AG04449 (cell line): ENCODE measurements at regions of chr14 and their contacts with region 1.

Region 1: DNA sequence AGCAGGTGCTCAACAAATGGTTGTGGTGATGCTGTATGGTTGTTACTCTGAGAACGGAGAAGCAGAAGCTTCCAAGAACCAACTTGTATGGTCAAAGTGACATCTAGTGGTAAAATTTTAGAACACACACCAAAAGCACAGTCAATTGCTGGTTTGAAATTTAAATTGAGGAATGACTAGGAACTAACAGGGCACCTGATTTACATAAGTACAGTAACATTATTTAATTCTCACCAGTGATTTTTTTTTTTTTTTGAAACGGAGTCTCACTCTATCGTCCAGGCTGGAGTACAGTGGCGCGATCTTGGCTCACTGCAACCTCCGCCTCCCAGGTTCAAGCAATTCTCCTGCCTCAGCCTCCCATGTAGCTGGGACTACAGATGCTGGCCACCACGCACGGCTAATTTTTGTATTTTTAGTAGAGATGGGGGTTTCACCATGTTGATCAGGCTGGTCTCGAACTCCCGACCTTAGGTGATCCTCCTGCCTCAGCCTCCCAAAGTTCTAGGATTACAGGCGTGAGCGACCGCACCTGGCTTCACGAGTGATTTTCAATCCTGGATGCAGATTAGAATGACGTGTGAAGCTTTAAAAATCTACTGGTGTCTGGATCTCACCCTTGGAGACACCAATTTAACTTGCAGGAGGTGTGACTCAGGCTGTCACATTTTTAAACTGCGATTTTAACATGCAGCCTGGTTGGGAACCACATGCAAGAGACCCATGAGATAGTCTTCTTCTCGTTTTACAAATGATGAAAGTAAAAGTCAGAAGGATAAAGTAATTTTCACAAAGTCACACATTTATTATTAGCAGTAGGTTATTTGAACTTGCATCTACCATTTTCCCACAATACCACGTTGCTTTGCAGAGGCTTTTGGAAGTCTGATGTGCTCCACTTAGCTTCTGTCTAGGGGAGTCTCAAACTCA is 14.1 kb upstream of the NUMB start:
- DNase-seq: no peak
- H3K4me3 ChIP-seq: no peak overlapping the region
- CTCF ChIP-seq: peak; percentile 50

Region 2: DNA sequence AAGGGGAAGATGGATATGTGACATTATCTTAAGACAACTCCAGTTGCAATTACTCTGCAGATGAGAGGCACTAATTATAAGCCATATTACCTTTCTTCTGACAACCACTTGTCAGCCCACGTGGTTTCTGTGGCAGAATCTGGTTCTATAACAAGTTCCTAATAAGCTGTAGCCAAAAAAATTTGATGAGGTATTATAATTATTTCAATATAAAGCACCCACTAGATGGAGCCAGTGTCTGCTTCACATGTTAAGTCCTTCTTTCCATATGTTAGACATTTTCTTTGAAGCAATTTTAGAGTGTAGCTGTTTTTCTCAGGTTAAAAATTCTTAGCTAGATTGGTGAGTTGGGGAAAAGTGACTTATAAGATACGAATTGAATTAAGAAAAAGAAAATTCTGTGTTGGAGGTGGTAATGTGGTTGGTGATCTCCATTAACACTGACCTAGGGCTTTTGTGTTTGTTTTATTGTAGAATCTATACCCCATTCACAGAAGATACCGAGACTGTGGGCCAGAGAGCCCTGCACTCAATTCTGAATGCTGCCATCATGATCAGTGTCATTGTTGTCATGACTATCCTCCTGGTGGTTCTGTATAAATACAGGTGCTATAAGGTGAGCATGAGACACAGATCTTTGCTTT is 299.2 kb before region 1 on chr14:
- CTCF ChIA-PET with region 1: interaction called, 133 read pairs
- POLR2A ChIA-PET with region 1: no interaction called
- DNase-seq: peak; percentile 23
- H3K4me3 ChIP-seq: no peak overlapping the region
- CTCF ChIP-seq: peak; percentile 37

Region 3: DNA sequence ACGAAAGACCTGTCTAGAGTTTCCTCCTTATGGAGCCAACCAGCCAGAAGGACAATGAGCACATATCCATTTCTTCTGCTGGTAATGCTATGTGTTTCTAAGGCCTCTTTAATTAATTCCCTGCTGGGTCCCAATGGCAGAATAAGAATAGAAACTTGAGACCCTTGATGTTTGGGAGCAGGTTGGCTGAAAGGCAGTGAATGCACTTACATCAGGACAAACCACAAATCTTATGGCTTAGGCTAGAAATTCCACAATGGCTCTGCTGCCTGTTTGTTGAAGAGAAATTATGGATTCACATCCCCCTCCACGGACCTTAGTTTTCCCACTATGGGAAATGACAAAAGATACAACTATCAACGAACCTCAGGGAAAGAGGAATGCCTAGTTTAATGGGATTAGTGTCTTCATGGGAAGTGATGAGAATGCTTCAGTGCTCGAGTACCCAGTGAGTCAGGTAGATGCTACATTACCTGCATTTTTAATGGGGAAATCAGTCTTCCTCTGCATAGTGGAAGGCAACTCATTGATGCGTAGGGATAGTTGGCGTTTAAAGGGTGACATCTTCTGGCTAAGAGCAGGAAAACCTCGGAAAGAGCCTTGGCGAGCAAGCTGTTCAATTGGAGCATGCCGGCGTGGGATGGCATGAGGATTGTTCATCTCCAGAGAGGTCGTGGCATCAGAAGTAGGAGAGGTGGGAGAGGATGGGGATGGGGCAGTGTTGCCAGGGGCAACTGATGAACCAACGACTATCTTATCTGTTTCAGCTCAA is 188.7 kb before region 1 on chr14:
- CTCF ChIA-PET with region 1: interaction called, 17 read pairs
- POLR2A ChIA-PET with region 1: no interaction called
- DNase-seq: no peak
- H3K4me3 ChIP-seq: no peak overlapping the region
- CTCF ChIP-seq: peak; percentile 42

Region 4: DNA sequence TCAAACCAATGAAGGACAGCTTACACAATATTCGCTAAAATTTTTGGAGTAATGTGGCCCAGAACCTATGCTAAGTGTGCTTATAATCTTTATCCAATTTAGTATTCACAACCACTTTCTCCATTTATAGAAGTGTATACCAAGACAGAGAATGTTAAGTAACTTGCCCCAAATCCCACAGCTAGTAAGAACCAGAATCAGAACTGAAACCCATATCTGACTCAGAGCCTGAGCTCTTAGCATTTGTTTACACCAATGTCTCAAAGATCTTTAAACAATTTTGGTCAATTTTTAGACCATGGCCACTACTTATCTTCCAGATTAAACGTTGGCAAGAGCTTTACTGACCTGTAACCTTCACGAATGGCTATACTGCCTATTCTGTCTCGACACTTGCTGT is 182.2 kb before region 1 on chr14:
- CTCF ChIA-PET with region 1: interaction called, 270 read pairs
- POLR2A ChIA-PET with region 1: interaction called, 3 read pairs
- DNase-seq: no peak
- H3K4me3 ChIP-seq: no peak overlapping the region
- CTCF ChIP-seq: no peak

Region 5: DNA sequence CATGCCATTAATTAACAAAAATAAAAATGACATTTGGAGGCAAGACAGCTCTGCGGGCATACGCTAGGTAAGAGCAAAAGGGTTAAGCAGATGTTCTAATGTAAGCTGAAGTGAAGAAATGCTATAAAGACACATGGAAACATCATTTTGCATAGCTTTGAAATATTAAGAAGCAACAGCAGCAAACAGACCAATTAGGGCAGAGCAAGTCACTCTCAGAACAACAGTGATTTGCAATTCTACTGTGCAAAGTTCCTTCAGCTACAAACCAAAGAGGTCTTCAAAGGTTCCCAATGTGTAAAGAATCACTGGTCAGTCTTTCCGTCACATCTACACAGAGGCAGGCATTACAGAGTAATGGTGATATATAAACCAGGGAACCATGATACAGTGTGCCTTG is 167.0 kb before region 1 on chr14:
- CTCF ChIA-PET with region 1: interaction called, 24 read pairs
- POLR2A ChIA-PET with region 1: no interaction called
- DNase-seq: no peak
- H3K4me3 ChIP-seq: no peak overlapping the region
- CTCF ChIP-seq: no peak

Region 6: GRCh38 chr14:73633116-73634010 is 160.9 kb after region 1 on chr14:
- CTCF ChIA-PET with region 1: interaction called, 13 read pairs
- POLR2A ChIA-PET with region 1: no interaction called
- DNase-seq: no peak
- H3K4me3 ChIP-seq: peak overlapping the region; percentile 52
- CTCF ChIP-seq: peak; percentile 71

Region 7: GRCh38 chr14:73878436-73878835 is 406.0 kb after region 1 on chr14:
- CTCF ChIA-PET with region 1: no interaction called
- POLR2A ChIA-PET with region 1: no interaction called
- DNase-seq: no peak
- H3K4me3 ChIP-seq: no peak overlapping the region
- CTCF ChIP-seq: no peak